ENCODE measurements at regions of chr1 and their contacts with region 1.

Region 1: GRCh38 chr1:39720094-39720999 is 18.3 kb upstream of the PPIE start:
- DNase-seq: peak; percentile 27 to 53 (median 43)
- H3K4me3 ChIP-seq: no peak overlapping the region
- H3K4me3 Mint-ChIP-seq: no peak overlapping the region
- H3K27ac ChIP-seq: no peak overlapping the region
- H3K27ac Mint-ChIP-seq: no peak overlapping the region
- H3K4me1 ChIP-seq: no peaks in the 10 kb centered on the region
- H3K4me1 Mint-ChIP-seq: peaks cover under 1% of the 10 kb centered on the region
- H3K27me3 ChIP-seq: peaks cover 13 to 49% of the 10 kb centered on the region in 2 donors
- H3K27me3 Mint-ChIP-seq: peaks cover 23 to 42% (median 37%) of the 10 kb centered on the region in 3 donors
- CTCF ChIP-seq: peak; percentile 81

Region 2: GRCh38 chr1:39609618-39610331 is 110.6 kb before region 1 on chr1:
- intact Hi-C with region 1: loop called (anchors 2 kb)
- DNase-seq: peak; percentile 21 to 69 (median 44)
- H3K4me3 ChIP-seq: no peak overlapping the region
- H3K4me3 Mint-ChIP-seq: peak overlapping the region; percentile 13 to 57
- H3K27ac ChIP-seq: no peak overlapping the region
- H3K27ac Mint-ChIP-seq: peak overlapping the region in 1 of 7 donors; percentile 25
- H3K4me1 ChIP-seq: peaks cover 0 to 4% of the 10 kb centered on the region in 2 donors
- H3K4me1 Mint-ChIP-seq: peaks cover 8% of the 10 kb centered on the region
- H3K27me3 ChIP-seq: no peaks in the 10 kb centered on the region
- H3K27me3 Mint-ChIP-seq: peaks cover 2 to 8% (median 4%) of the 10 kb centered on the region in 3 donors
- CTCF ChIP-seq: peak; percentile 91

Measured in CD14-positive monocyte (primary cell).